ENCODE measurements at regions of chr5 and their contacts with region 1.

Region 1: DNA sequence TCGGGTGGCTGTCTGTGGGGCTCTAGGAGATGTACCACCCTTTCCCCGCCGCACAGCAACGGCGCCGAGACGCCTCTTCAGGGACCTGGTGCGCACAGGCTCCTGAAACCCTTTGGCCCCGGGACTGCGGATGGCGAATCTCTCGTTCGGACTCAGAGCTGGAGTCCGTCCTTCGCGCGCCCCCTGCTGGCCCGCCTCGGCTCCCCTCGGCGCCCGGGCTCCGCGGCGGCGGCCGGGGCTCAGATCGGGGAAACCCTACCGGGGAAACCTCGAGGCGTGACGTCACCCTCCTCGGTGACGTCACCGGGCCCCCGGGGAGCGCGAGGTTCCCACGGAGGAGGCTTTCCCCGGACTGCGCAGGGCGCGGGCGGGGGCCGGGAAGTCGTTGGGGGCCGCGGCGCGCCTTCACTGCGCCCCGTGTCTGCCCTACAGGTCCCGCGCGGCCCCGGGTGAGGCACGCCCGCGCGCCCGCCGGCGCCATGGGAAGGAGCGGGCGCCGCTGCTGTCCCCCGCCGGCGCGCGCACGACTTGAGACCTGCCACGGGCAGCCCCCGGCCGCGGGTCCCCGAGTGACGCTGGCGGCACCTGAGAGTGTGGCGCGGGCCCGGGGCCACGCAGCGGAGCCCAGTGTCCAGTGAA is 7.9 kb downstream of the PRR7 start:
- DNase-seq: peak; percentile 92 to 98 (median 94)
- ATAC-seq: peak; percentile 71
- H3K4me3 ChIP-seq: peak overlapping the region; percentile 88
- H3K27ac ChIP-seq: peak overlapping the region; percentile 91
- H3K4me1 ChIP-seq: peaks cover 0 to 58% of the 10 kb centered on the region in 2 experiments; a peak in 3 of 5 replicates
- H3K27me3 ChIP-seq: no peaks in the 10 kb centered on the region
- CTCF ChIP-seq: peak; percentile 90 to 98 (median 96)
- EP300 ChIP-seq: no peak
- POLR2A ChIP-seq: no peak
- RAD21 ChIP-seq: peak; percentile 95

Region 2: DNA sequence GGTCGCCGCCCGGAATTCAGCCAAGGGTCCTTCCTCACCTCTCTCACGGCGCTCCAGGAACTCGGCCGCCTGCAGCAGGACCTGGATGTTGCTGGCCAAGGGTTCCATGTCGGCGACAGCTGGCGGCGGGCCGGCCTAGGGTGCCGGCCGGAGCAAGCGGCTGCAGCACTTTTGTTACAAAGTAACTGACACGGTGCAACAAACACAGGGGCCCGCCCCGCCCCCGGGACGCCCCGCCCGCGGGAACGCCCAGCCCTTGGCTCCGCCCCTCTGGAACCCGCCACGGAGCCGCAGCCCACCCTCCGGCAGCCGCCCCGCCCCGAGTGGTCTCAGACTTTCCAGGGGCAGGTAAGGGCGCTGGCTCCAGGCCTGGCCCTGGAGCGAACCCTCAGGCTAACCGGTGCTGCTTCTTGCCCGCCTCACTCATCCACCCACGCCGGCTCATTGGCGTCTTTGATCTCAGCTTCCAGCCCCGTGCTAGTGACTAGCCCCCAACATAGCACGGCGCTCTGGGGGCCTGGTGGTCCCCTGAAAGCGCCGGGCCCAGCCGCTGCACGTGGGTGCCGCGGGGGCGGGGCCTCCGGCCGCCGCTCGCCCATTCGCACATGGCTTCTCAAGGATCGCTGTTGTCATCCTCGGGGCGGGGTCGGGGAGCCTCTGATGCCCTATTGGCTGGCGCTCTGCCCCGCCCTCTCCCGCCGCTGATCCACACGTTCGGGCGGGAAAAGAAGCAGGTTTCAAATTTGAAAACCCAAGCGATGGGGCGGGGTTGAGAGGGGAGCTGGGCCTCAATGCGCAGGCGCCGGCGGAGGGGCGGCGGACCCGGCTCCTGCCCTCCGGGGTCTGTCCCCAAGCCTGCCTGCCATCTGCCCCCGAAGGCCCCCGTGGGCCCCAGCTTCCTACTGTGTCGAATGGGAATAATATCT is 142.5 kb before region 1 on chr5 and contains the start of gene MXD3:
- CTCF ChIA-PET with region 1: interaction called, 12 read pairs
- POLR2A ChIA-PET with region 1: interaction called, 6 read pairs
- in situ Hi-C with region 1: no loop called
- intact Hi-C with region 1: loop called (anchors 2 kb)
- DNase-seq: peak; percentile 96 to 98 (median 97)
- ATAC-seq: peak; percentile 86
- H3K4me3 ChIP-seq: peak within 1 kb of the TSS; percentile 62
- H3K27ac ChIP-seq: peak within 1 kb of the TSS; percentile 100
- H3K4me1 ChIP-seq: peaks cover 23 to 77% of the 10 kb centered on the region in 2 experiments
- H3K27me3 ChIP-seq: no peaks in the 10 kb centered on the region
- CTCF ChIP-seq: no peak
- EP300 ChIP-seq: no peak
- POLR2A ChIP-seq: peak; percentile 81
- RAD21 ChIP-seq: no peak
- polyA plus RNA-seq, gene MXD3: 0.28 to 0.59 TPM

Region 3: GRCh38 chr5:177390363-177391300 is 63.9 kb before region 1 on chr5:
- CTCF ChIA-PET with region 1: interaction called, 78 read pairs
- POLR2A ChIA-PET with region 1: interaction called, 6 read pairs
- in situ Hi-C with region 1: loop called (anchors 5 kb)
- intact Hi-C with region 1: loop called (anchors 1 kb)
- DNase-seq: peak; percentile 92 to 93 (median 92)
- ATAC-seq: peak; percentile 96
- H3K4me3 ChIP-seq: no peak overlapping the region
- H3K27ac ChIP-seq: no peak overlapping the region
- H3K4me1 ChIP-seq: peaks cover 7 to 8% of the 10 kb centered on the region in 2 experiments; a peak in 3 of 5 replicates
- H3K27me3 ChIP-seq: peaks cover 0 to 4% of the 10 kb centered on the region in 2 experiments; a peak in 3 of 5 replicates
- CTCF ChIP-seq: peak; percentile 96 to 97 (median 97)
- EP300 ChIP-seq: no peak; the same call in 1 of the 2 replicates
- POLR2A ChIP-seq: no peak
- RAD21 ChIP-seq: peak; percentile 84 to 93

Region 4: GRCh38 chr5:177425801-177426565 is 28.5 kb before region 1 on chr5:
- CTCF ChIA-PET with region 1: no interaction called
- POLR2A ChIA-PET with region 1: interaction called, 210 read pairs
- in situ Hi-C with region 1: no loop called
- intact Hi-C with region 1: loop called (anchors 2 kb)
- DNase-seq: peak; percentile 98 to 100 (median 98)
- ATAC-seq: peak; percentile 91
- H3K4me3 ChIP-seq: peak overlapping the region; percentile 51
- H3K27ac ChIP-seq: peak overlapping the region; percentile 91
- H3K4me1 ChIP-seq: peaks cover 30 to 53% of the 10 kb centered on the region in 2 experiments
- H3K27me3 ChIP-seq: no peaks in the 10 kb centered on the region
- CTCF ChIP-seq: no peak
- EP300 ChIP-seq: 0 out of 2 replicates have a peak, but pooled peaks have one; percentile 17
- POLR2A ChIP-seq: peak; percentile 93
- RAD21 ChIP-seq: no peak

Region 5: GRCh38 chr5:177497292-177498033 is 42.9 kb after region 1 on chr5 and contains the start of gene PDLIM7:
- CTCF ChIA-PET with region 1: interaction called, 3 read pairs
- POLR2A ChIA-PET with region 1: interaction called, 6 read pairs
- in situ Hi-C with region 1: no loop called
- intact Hi-C with region 1: loop called (anchors 1 kb)
- DNase-seq: peak; percentile 97 to 99 (median 98)
- ATAC-seq: peak; percentile 81
- H3K4me3 ChIP-seq: peak within 1 kb of the TSS; percentile 82
- H3K27ac ChIP-seq: peak within 1 kb of the TSS; percentile 95
- H3K4me1 ChIP-seq: peaks cover 57 to 85% of the 10 kb centered on the region in 2 experiments
- H3K27me3 ChIP-seq: no peaks in the 10 kb centered on the region
- CTCF ChIP-seq: peak; percentile 31 to 37 (median 35); a peak in 2 of 6 replicates
- EP300 ChIP-seq: no peak; the same call in none of the 2 replicates
- POLR2A ChIP-seq: peak; percentile 97
- RAD21 ChIP-seq: 0 out of 4 replicates have a peak, but pooled peaks of 1 of the 2 experiments have one; percentile 2
- polyA plus RNA-seq, gene PDLIM7: 2.1 to 4.1 TPM

Measured in K562 (cell line).